Activated CD8-positive, alpha-beta T cell treated with anti-CD3 and anti-CD28 coated beads, Interleukin-2, amount 10 ng/mL, durations not matched to agents 7 days and 5 days (primary cell): ENCODE measurements at regions of chr14 and their contacts with region 1.

Region 1: GRCh38 chr14:23057757-23058653 is 685 bp upstream of the CDH24 start:
- DNase-seq: peak; percentile 91
- ATAC-seq: peak; percentile 76
- H3K4me3 Mint-ChIP-seq: peak overlapping the region; percentile 83
- H3K27ac Mint-ChIP-seq: peak overlapping the region; percentile 34
- H3K4me1 Mint-ChIP-seq: peaks cover 18% of the 10 kb centered on the region
- H3K27me3 Mint-ChIP-seq: peaks cover 9% of the 10 kb centered on the region

Region 2: DNA sequence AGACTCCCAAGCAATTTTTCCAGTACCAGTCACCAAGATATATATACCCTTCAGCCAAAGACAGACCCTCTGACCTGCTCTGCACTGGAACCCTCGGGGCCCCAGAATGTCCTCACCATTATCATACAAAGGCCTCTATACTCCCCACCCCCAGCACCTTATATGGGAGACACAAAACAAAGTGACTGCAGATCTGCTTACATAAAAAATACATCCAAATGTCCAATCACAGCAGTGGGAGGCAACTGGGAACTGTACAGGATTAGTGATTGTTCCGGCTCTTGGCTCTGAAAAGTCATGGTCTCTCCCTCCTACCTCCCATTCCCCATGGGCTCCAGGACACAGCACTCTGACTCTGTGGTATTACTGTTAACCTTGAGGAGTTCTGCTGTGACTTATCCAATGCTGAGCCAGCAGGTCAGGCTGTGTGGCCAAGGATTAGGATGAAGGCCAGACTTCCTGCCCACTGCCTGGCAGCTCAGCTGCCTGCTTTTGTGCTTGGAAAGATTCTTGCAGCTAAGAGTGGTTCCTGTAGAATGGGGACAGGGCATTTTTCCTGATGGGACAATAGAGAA is 277.8 kb before region 1 on chr14:
- CTCF ChIA-PET with region 1: no interaction called
- POLR2A ChIA-PET with region 1: no interaction called
- DNase-seq: no peak
- ATAC-seq: no peak
- H3K4me3 Mint-ChIP-seq: no peak overlapping the region
- H3K27ac Mint-ChIP-seq: no peak overlapping the region
- H3K4me1 Mint-ChIP-seq: no peaks in the 10 kb centered on the region
- H3K27me3 Mint-ChIP-seq: no peaks in the 10 kb centered on the region

Region 3: DNA sequence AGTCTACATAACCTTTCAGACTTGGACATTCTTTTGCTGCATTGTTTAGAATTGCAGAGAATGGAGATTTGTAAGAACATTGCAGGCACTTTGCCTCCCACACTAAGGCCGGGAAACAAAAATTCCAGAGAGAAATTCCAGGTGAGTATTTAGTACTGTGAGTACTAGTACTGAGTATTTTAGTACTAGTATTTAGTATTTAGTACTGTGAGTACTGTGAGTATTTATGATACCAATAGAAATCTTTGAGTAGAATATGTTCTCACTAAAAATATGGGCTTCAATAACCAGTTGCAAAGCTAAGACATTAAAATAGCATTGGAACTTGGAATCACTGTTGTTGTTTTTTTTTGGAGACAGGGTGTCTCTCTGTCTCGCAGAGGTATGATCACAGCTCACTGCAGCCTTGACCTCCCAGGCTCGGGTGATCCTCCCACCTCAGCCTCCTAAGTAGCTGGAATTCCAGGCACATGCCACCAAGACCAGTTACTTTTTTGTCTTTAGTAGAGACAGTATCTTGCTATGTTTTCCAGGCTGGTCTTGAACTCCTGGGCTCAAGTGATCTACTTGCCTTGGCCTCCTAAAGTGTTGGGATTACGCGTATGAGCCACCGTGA is 95.8 kb before region 1 on chr14:
- CTCF ChIA-PET with region 1: interaction called, 21 read pairs
- POLR2A ChIA-PET with region 1: no interaction called
- DNase-seq: no peak
- ATAC-seq: no peak
- H3K4me3 Mint-ChIP-seq: no peak overlapping the region
- H3K27ac Mint-ChIP-seq: no peak overlapping the region
- H3K4me1 Mint-ChIP-seq: peaks cover 8% of the 10 kb centered on the region
- H3K27me3 Mint-ChIP-seq: peaks cover 5% of the 10 kb centered on the region

Region 4: DNA sequence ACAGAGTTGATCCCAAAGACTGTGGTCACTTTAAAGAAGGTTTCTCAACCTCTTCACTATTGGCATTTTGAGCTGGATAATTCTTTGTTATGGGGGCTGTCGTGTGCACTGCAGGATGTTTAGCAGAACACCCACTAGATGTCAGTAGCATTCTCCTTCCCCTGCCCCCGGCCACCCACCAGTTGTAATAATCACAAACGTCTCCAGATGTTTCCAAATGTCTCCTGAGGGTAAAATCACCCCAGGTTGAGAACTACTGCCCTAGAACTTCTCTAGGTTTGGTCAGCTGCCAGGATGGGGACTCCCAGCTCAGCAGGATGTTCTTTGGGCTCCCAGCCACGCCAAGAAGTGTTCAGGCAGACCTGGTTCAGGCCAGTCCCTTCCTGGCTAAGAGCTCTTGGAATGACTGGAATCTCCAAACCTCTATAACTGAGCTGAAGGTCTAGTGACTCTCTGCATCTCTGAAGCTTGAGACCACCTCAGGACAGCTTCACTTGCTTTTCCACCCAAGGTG is 63.2 kb before region 1 on chr14:
- CTCF ChIA-PET with region 1: interaction called, 489 read pairs
- POLR2A ChIA-PET with region 1: interaction called, 9 read pairs
- DNase-seq: peak; percentile 56
- ATAC-seq: peak; percentile 83
- H3K4me3 Mint-ChIP-seq: no peak overlapping the region
- H3K27ac Mint-ChIP-seq: no peak overlapping the region
- H3K4me1 Mint-ChIP-seq: peaks cover 3% of the 10 kb centered on the region
- H3K27me3 Mint-ChIP-seq: no peaks in the 10 kb centered on the region

Region 5: GRCh38 chr14:23025151-23025814 is 32.7 kb before region 1 on chr14:
- CTCF ChIA-PET with region 1: interaction called, 21 read pairs
- POLR2A ChIA-PET with region 1: no interaction called
- DNase-seq: no peak
- ATAC-seq: no peak
- H3K4me3 Mint-ChIP-seq: no peak overlapping the region
- H3K27ac Mint-ChIP-seq: peak overlapping the region; percentile 40
- H3K4me1 Mint-ChIP-seq: peaks cover 50% of the 10 kb centered on the region
- H3K27me3 Mint-ChIP-seq: no peaks in the 10 kb centered on the region

Region 6: DNA sequence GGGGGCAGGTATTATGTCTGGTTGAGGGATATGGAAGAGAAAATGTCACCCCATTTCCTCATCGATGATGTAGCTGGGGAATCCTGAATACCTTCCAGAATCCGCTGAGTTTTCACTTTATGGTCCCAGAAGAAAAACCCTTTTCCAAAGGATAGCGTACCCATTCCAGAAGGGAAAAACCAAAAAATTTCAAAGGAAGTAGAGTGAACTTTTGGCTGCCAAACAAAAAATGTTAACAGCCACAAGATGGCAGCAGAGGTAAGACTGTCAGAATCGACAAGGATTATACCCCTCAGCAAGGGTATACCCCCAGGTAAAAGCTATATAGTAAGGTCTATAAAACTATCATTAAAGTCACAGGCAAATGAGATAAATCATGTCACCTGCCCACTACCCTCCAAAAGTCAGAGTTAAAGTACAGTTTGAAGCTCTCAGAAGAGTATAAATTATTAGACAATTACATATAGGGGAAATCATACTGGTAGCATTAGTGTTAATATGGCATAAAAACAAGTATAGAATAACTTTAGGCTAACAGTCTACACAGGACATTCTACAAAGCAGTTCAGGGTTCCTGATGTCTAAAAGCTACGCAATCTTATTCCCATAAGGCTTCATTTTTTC is 18.9 kb after region 1 on chr14:
- CTCF ChIA-PET with region 1: interaction called, 37 read pairs
- POLR2A ChIA-PET with region 1: interaction called, 7 read pairs
- DNase-seq: peak; percentile 56
- ATAC-seq: peak; percentile 63
- H3K4me3 Mint-ChIP-seq: no peak overlapping the region
- H3K27ac Mint-ChIP-seq: no peak overlapping the region
- H3K4me1 Mint-ChIP-seq: peaks cover 5% of the 10 kb centered on the region
- H3K27me3 Mint-ChIP-seq: no peaks in the 10 kb centered on the region

Region 7: DNA sequence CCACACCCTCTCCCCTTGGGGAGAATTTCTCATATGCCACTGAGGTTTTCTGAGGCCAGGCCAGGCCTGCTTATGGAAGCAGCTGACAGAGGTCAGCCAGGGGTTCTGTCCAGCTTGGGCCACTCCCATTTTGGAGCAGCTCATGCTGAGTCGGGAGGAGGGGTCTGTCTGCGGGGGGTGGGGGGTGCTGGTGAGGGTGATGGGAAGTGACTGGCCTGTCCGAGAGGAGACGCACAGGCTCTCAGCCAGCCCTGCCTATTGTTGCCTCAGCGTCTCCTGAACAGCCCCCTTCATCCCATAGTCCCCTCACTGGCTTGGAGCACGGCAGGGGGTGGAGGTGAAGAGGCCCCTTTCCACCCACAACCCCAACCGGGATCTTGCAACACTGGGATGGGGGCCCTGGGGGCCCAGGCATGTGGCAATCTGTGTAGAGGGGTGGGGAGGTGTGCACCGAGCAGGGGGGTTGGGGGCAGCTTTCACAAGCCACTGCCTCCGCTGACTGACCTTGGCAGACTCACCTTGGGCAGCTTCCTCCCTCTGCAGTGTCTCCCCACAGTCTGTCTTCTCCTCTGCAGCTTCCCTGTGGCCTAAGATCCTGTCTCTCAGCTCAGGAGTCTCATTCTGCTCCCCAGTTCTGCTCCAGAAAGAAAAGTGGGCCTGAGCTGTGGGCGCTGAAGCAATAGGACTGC is 55.6 kb after region 1 on chr14:
- CTCF ChIA-PET with region 1: interaction called, 11 read pairs
- POLR2A ChIA-PET with region 1: no interaction called
- DNase-seq: no peak
- ATAC-seq: no peak
- H3K4me3 Mint-ChIP-seq: no peak overlapping the region
- H3K27ac Mint-ChIP-seq: no peak overlapping the region
- H3K4me1 Mint-ChIP-seq: peaks cover 7% of the 10 kb centered on the region
- H3K27me3 Mint-ChIP-seq: no peaks in the 10 kb centered on the region